Right ventricle myocardium superior (tissue), 1 donor: ENCODE measurements at regions of chr3 and their contacts with region 1.

Region 1: DNA sequence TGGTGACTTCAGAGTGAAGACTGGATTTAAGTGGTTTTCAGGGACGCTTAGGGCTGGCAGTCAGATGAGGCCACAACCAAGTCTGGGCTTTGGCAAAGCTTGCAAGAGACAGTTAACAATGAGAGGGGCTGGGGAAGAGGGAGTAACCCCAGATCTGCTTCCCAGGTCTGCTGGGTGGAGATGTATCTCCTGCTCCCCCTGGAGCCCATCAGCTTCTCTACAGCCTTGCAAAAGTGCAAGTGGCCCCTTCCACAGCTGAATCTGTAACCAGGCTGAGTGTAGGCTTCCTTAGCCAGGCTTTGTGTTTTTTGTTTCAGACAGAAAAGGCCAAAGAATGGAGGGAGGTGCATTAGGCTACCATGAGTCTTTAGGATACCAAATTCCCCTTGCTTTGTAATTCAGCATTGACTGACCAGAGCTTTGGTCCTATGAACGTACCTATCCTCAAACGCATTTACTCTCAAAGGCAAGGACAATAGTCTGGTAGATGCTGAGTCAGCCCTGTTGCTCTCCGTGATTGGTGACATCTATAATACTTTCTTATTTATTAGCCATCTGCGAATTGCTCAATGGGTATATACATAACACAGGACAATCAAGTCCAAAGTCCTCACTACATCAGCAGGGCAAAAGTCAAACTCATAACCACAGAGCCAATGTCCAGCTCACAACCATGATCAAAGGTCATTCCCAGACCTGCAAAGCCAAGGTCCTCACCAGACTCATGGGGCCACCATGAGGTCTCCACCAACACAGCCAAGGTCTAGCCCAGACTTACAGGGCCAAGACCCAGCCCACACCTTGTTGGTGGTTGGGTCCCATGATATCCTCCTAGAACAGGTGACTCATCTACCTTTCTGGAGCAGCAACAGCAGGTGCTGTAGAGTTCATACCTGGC is 17.1 kb downstream of the CCDC13 start:
- DNase-seq: no peak
- ATAC-seq: peak; percentile 76

Region 2: GRCh38 chr3:42572278-42572677 is 183.7 kb before region 1 on chr3:
- intact Hi-C with region 1: loop called (anchors 5 kb)
- DNase-seq: no peak
- ATAC-seq: peak; percentile 73

Region 3: DNA sequence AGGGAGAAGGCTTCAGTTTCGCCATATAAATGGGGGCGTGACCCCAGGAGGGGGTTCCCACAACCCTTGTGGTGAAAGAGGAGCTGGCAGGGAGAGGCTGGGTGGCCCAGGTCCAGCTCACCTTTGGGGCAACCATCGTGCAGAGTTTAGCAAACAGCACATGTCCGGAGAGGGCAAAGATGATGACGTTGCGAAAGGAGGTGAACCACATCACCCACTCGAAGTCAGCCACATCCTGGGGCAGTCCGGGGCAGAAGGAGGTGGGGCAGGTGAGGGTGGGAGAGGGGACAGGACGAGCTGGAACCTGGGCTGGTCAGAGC is 57.1 kb before region 1 on chr3:
- intact Hi-C with region 1: no loop called
- DNase-seq: no peak
- ATAC-seq: no peak

Region 4: DNA sequence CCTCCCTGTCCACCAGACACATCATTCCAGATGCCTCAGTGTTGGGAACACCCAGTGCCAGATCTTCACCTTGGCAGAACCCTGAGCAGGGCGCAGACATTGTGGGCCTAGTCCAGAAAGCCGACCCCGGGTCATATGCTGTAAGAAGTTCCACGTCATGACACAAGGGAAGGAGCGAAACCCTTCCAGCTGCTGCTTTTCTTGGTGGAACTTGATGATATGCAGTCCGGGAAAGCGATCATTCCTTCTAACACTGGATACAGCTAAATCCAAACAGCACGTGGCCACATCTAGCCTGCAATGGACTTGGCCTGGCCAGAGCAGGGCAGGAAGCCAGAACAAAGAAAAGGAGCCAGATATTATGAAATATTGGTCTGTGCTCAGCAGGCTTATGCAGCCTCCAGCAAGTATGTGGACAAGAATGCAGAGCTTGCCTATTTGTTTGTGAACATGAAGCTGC is 245.2 kb after region 1 on chr3:
- intact Hi-C with region 1: no loop called
- DNase-seq: peak; percentile 88
- ATAC-seq: peak; percentile 91